Activated T-helper 1 cell treated with anti-CD3 and anti-CD28 coated beads, Interleukin-12 subunit alpha, Interleukin-12 subunit beta, Interleukin-2, Interleukin-4 antibody, amounts not matched to agents 30 ng/mL and 10 ng/mL and 1 ng/mL, durations not matched to agents 14 hours and 24 hours and 36 hours (primary cell): ENCODE measurements at regions of chr11 and their contacts with region 1.

Region 1: GRCh38 chr11:93543292-93543977 is at the start of gene SMCO4:
- DNase-seq: peak; percentile 67
- H3K4me3 Mint-ChIP-seq: peak within 1 kb of the TSS; percentile 93
- H3K27ac Mint-ChIP-seq: peak within 1 kb of the TSS; percentile 85
- H3K4me1 Mint-ChIP-seq: peaks cover 28% of the 10 kb centered on the region
- H3K27me3 Mint-ChIP-seq: peaks cover 3% of the 10 kb centered on the region
- total RNA-seq, gene SMCO4: 33.4 and 34.8 TPM in 2 replicates

Region 2: GRCh38 chr11:93131709-93132108 is 411.7 kb before region 1 on chr11:
- intact Hi-C with region 1: no loop called
- DNase-seq: no peak
- H3K4me3 Mint-ChIP-seq: no peak overlapping the region
- H3K27ac Mint-ChIP-seq: no peak overlapping the region
- H3K4me1 Mint-ChIP-seq: no peaks in the 10 kb centered on the region
- H3K27me3 Mint-ChIP-seq: peaks cover 5% of the 10 kb centered on the region

Region 3: DNA sequence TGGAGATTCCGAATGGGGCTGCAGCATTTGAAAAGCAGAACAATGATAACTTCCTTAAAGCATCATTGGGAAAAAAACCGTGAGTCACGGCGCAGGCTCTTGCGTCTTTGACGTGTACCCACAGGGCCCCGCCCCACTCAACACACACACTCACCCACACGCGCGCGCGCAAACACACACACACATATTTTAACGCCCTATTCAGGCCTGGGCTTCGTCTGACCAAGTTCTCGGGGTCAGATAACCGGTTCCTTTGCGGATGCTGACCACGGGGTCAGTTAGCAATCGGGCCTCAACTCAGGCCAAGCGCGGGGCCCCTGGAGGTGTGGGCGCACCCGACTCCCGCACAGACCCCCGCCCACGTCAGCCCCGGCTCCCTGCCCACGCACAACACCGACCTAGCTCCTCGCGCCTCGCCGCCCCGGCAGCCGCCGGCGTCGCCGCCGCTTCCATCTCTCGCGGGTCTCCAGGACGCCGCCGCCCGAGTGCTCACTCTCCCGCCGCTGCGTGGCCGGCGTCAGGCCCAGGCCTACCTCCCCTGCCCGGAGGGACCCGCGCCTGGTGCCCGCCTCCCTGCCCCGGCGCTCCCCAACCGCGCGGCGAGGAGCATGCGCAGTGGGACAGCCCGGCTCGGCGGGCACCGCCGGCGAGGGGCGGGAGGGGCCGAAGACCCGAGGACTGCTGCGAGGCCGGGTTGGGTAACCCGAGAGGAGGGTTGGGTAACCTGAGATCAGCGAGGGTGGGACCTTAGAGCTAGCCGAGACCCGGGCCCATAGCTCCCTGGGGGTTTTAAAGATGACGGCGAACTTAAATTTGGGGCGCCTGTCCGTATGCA is 345.8 kb before region 1 on chr11 and contains the start of gene SLC36A4:
- intact Hi-C with region 1: loop called (anchors 1 kb)
- DNase-seq: peak; percentile 80
- H3K4me3 Mint-ChIP-seq: peak within 1 kb of the TSS; percentile 97
- H3K27ac Mint-ChIP-seq: peak within 1 kb of the TSS; percentile 97
- H3K4me1 Mint-ChIP-seq: peaks cover 13% of the 10 kb centered on the region
- H3K27me3 Mint-ChIP-seq: peaks cover 13% of the 10 kb centered on the region
- total RNA-seq, gene SLC36A4: 16.9 and 17.1 TPM in 2 replicates

Region 4: GRCh38 chr11:93500759-93501158 is 42.7 kb before region 1 on chr11:
- intact Hi-C with region 1: loop called (anchors 5 kb)
- DNase-seq: no peak
- H3K4me3 Mint-ChIP-seq: no peak overlapping the region
- H3K27ac Mint-ChIP-seq: no peak overlapping the region
- H3K4me1 Mint-ChIP-seq: peaks cover 18% of the 10 kb centered on the region
- H3K27me3 Mint-ChIP-seq: no peaks in the 10 kb centered on the region

Region 5: DNA sequence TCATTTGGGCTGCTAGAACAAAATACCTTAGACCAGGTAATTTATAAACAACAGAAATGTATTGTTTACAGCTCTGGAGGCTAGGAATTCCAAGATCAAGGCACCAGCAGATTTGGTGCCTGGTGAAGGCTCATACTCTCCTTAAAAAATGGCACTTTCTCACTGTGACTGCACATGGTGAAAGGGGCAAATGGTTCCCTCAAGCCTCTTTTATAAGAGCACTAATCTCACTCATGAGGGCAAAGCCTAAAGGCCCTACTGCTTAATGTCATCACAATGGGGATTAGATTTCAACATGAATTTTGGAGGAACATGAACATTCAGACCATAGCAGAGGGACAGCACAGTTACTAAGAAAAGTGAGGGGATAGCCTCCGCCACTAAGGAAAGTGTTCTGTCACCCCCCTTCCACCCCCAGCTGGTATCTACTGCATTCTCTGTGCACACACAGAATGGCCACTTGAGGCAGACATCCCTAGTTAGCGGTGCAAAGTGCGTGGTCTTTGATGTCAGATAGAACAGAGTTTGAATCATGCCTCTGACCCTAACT is 70.8 kb after region 1 on chr11:
- intact Hi-C with region 1: loop called (anchors 5 kb)
- DNase-seq: no peak
- H3K4me3 Mint-ChIP-seq: no peak overlapping the region
- H3K27ac Mint-ChIP-seq: no peak overlapping the region
- H3K4me1 Mint-ChIP-seq: no peaks in the 10 kb centered on the region
- H3K27me3 Mint-ChIP-seq: peaks cover 2% of the 10 kb centered on the region

Region 6: DNA sequence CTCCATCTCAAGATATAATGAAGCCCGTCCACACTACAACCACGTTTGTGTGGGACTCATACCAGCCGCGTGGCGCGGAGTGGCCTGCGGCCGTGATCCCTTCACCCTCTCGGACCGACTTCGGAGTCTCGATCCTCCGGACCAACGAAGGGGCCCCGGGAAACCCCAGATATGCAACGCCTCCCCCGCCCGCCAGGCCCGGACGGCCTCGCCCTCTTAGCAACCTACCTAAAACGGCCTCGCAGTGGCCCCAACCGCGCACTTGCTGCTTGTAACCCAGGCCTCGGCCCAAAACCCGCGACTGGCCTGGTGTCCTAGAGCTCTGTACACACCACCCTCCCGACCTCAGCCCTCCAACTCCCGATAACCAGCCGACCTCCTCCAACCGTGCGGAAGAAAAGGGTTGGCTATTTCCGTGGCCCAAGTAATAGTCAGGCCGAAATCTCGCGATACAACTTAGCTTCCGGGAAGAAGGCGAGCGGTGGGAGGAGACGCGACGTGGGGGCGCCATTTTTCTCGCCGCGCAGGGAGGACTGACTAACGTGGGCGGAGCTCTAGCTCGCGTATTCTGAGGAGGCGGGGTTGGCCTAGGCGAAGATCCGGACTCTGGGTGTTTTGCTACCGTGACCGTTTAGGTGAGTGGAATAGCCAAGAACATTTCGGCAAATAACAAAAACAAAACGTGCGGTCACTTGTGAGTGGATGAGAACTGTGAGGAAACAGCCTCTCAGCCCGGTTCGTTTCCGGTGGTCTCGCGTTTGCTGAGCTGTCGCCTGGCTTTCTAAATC is 197.9 kb after region 1 on chr11 and contains the starts of genes C11orf54 and TAF1D:
- intact Hi-C with region 1: loop called (anchors 5 kb)
- DNase-seq: peak; percentile 96
- H3K4me3 Mint-ChIP-seq: peak within 1 kb of the TSS; percentile 100
- H3K27ac Mint-ChIP-seq: peak within 1 kb of the TSS; percentile 99
- H3K4me1 Mint-ChIP-seq: peaks cover 53% of the 10 kb centered on the region
- H3K27me3 Mint-ChIP-seq: no peaks in the 10 kb centered on the region
- total RNA-seq, gene C11orf54: 19.3 and 21.6 TPM in 2 replicates
- total RNA-seq, gene TAF1D: 337 and 345 TPM in 2 replicates

Region 7: GRCh38 chr11:94543695-94544645 is 1000.5 kb after region 1 on chr11 and contains the start of gene FUT4:
- intact Hi-C with region 1: loop called (anchors 5 kb)
- DNase-seq: peak; percentile 70
- H3K4me3 Mint-ChIP-seq: peak within 1 kb of the TSS; percentile 98
- H3K27ac Mint-ChIP-seq: peak within 1 kb of the TSS; percentile 99
- H3K4me1 Mint-ChIP-seq: peaks cover 45% of the 10 kb centered on the region
- H3K27me3 Mint-ChIP-seq: peaks cover 5% of the 10 kb centered on the region
- total RNA-seq, gene FUT4: 8.0 and 8.6 TPM in 2 replicates